Heart right ventricle (tissue), 16 donors: ENCODE measurements at regions of chr6 and their contacts with region 1.

Region 1: DNA sequence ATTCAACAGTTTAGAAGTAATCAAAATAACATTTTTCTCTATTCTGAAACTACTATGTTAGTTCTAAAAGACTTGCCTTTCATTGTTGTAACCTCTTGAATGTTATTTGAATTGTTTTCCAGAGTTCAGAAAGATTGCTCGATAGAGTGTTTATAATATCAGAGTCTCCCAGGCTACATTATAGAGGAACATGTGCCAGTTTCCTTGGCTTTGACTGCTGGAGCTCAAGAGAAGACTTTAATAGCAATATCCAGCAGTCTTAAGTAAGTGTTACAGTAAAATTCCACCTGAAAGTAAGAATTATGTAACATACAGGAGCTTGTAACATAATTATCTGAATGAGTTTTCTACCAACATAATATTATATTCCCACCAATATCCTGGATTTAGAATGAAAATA is 991.8 kb upstream of the ADGRB3 start:
- DNase-seq: no peak
- ATAC-seq: no peak
- H3K4me3 ChIP-seq: no peak overlapping the region
- H3K27ac ChIP-seq: no peak overlapping the region
- H3K4me1 ChIP-seq: no peaks in the 10 kb centered on the region
- H3K27me3 ChIP-seq: no peaks in the 10 kb centered on the region
- CTCF ChIP-seq: no peak

Region 2: GRCh38 chr6:67687396-67687795 is 44.1 kb after region 1 on chr6:
- intact Hi-C with region 1: loop called in 1 of 10 experiments (anchors 2 kb)
- DNase-seq: no peak
- ATAC-seq: no peak
- H3K4me3 ChIP-seq: no peak overlapping the region
- H3K27ac ChIP-seq: no peak overlapping the region
- H3K4me1 ChIP-seq: no peaks in the 10 kb centered on the region
- H3K27me3 ChIP-seq: no peaks in the 10 kb centered on the region
- CTCF ChIP-seq: no peak